Naive thymus-derived CD8-positive, alpha-beta T cell (primary cell): ENCODE measurements at regions of chr7 and their contacts with region 1.

Region 1: DNA sequence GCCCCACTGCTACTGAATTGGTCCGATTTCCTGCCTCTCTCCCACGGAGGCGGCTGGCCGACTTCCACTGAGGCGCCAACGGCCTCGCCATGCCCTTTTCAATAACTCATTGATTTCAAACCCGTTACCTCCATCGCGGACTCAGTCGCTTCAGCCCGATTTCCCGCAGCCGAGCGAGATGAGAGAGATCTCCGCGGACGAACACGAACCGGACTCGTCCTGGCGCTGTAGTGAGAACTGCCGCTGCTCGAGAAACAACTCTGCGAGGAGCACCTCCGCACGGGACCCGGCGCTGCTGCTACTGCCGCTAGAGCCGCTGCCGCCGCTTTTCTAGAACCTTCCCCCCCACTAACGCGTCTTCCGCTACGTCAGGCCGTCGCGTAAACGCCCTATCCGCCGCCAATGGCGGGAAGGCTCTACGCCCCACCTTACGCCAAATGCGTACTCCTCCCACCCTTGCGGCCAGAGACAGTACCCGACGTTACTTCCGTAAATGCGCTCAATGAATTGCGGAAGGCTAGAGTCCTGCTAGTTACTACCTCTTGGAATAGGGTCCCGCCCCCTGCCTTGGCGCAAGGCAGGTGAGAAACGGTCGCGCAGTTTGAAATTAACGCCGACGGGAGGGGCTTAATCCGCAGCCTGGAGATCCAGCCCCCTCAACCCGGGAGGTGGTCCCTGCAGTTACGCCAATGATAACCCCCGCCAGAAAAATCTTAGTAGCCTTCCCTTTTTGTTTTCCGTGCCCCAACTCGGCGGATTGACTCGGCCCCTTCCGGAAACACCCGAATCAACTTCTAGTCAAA is at the start of gene HNRNPA2B1:
- DNase-seq: peak; percentile 89 to 100 (median 99)
- ATAC-seq: peak; percentile 74 to 78
- H3K4me3 Mint-ChIP-seq: peak within 1 kb of the TSS; percentile 96 to 100 (median 100)
- H3K27ac Mint-ChIP-seq: peak within 1 kb of the TSS; percentile 90 to 100 (median 100)
- H3K4me1 Mint-ChIP-seq: peaks cover 29 to 58% (median 53%) of the 10 kb centered on the region in 4 donors
- H3K27me3 Mint-ChIP-seq: peaks cover 0 to 9% (median 0%) of the 10 kb centered on the region in 5 donors
- polyA plus RNA-seq, gene HNRNPA2B1: 506 to 789 (median 577) TPM

Region 2: DNA sequence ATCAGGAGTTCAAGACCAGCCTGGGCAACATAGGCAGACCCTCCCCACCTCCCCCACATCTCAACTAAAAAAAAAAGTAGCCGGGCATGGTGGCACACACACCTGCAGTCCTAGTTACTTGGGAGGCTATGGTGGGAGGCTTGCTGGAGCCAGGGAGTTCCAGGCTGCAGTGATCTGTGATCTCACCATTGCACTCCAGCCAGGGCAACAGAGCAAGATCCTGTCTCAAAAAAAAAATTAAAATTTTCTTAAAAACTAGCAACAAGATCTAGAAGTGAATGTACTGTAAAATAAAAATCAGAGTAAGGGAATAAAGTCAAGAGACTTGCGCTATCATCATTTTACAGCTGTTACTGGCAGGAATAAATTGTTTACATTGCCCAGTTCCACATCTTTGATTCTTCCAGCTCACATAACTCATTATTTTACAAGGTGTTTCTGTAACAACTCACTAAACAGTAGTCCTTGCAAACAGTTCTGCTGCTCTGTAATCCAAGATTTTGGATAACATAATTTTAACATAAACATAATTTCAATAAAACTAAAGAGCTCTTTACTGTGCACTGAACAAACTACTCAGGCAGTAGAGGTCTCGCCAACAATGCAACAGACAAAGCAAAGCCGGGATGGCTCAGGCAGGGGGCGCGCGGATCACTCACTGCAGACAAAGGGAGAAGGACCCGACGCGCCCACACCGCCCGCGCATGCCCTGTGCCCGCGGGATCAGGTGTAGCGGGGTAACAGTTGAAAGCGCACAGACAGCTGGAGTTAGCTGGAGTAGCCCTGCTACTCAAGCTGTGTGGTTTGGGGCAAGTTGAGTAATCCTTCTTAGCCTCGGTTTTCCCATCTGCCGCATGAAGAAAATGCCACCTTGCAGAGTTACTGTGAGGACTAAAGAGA is 122.0 kb before region 1 on chr7:
- POLR2A ChIA-PET with region 1: interaction called, 20 read pairs
- DNase-seq: peak; percentile 72 to 92 (median 82)
- ATAC-seq: peak; percentile 100
- H3K4me3 Mint-ChIP-seq: peak overlapping the region in 8 of 10 donors; percentile 22 to 58 (median 34)
- H3K27ac Mint-ChIP-seq: peak overlapping the region in 2 of 10 donors; percentile 24 to 45
- H3K4me1 Mint-ChIP-seq: peaks cover 0 to 10% (median 8%) of the 10 kb centered on the region in 4 donors
- H3K27me3 Mint-ChIP-seq: peaks cover 3 to 36% (median 6%) of the 10 kb centered on the region in 5 donors

Region 3: DNA sequence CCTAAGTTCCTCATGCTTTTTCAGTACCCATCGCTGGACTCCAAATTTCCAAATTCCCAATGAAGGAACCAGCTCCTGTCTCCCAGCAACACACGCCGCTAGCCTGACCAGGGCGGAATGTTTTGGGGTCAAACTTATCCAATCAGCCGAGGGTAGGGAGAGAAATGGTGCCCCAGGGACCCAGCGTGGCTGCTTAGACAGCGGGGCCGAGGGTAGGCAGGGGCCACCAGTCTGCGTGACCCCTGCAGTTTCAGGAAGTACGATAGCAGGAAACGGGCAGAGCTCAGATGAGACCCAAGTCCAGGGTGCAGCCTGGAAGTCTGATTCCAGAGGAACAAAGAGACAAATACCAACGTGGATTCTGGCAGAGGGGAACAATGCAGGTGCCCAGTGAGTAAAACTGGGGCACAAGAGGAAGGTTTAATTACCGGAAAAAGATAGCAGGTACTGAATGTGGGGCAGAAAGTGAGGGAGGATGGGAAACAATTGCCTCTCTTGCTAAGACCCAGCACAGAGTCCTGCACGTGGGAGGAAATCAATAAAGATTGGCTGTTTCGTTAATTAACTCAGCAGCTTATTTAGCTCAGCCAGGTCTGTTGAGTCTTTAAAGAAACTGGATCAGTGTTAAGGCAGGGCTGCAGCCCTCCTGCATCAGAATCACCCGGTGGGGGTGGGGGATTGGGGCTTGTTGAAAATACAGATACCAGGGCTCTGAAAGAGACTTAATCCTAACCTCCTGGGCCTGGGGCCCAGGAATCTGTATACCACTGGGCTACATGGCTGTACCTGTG is 99.1 kb before region 1 on chr7:
- POLR2A ChIA-PET with region 1: interaction called, 61 read pairs
- DNase-seq: peak in 1 of 10 donors; percentile 20
- ATAC-seq: peak; percentile 46 to 56
- H3K4me3 Mint-ChIP-seq: peak overlapping the region in 9 of 10 donors; percentile 70 to 88 (median 76)
- H3K27ac Mint-ChIP-seq: peak overlapping the region in 9 of 10 donors; percentile 18 to 94 (median 87)
- H3K4me1 Mint-ChIP-seq: peaks cover 14 to 60% (median 42%) of the 10 kb centered on the region in 4 donors
- H3K27me3 Mint-ChIP-seq: no peaks in the 10 kb centered on the region

Region 4: GRCh38 chr7:26187380-26188205 is 13.1 kb before region 1 on chr7:
- POLR2A ChIA-PET with region 1: interaction called, 110 read pairs
- DNase-seq: peak in 1 of 10 donors; percentile 17
- ATAC-seq: peak; percentile 19 to 20
- H3K4me3 Mint-ChIP-seq: peak overlapping the region in 2 of 10 donors; percentile 30 to 65
- H3K27ac Mint-ChIP-seq: peak overlapping the region; percentile 20 to 90 (median 68)
- H3K4me1 Mint-ChIP-seq: peaks cover 32 to 90% (median 82%) of the 10 kb centered on the region in 4 donors
- H3K27me3 Mint-ChIP-seq: no peaks in the 10 kb centered on the region